Activated naive CD8-positive, alpha-beta T cell treated with anti-CD3 and anti-CD28 coated beads, Interleukin-2, amount 10 ng/mL, durations not matched to agents 7 days and 5 days (primary cell): ENCODE measurements at regions of chr7 and their contacts with region 1.

Region 1: GRCh38 chr7:142854372-142855113 is at the start of gene EPHB6:
- DNase-seq: peak; percentile 76
- ATAC-seq: peak; percentile 67
- H3K4me3 Mint-ChIP-seq: peak within 1 kb of the TSS; percentile 93
- H3K27ac Mint-ChIP-seq: peak within 1 kb of the TSS; percentile 72
- H3K4me1 Mint-ChIP-seq: peaks cover 11% of the 10 kb centered on the region
- H3K27me3 Mint-ChIP-seq: peaks cover 18% of the 10 kb centered on the region
- total RNA-seq, gene EPHB6: 20.1 to 25.2 TPM

Region 2: GRCh38 chr7:142866361-142867058 is 12.0 kb after region 1 on chr7:
- POLR2A ChIA-PET with region 1: interaction called, 10 read pairs
- DNase-seq: no peak
- ATAC-seq: no peak
- H3K4me3 Mint-ChIP-seq: no peak overlapping the region
- H3K27ac Mint-ChIP-seq: no peak overlapping the region
- H3K4me1 Mint-ChIP-seq: peaks cover 2% of the 10 kb centered on the region
- H3K27me3 Mint-ChIP-seq: no peaks in the 10 kb centered on the region